Activated naive CD4-positive, alpha-beta T cell treated with anti-CD3 and anti-CD28 coated beads for 36 hours (primary cell): ENCODE measurements at regions of chr14 and their contacts with region 1.

Region 1: DNA sequence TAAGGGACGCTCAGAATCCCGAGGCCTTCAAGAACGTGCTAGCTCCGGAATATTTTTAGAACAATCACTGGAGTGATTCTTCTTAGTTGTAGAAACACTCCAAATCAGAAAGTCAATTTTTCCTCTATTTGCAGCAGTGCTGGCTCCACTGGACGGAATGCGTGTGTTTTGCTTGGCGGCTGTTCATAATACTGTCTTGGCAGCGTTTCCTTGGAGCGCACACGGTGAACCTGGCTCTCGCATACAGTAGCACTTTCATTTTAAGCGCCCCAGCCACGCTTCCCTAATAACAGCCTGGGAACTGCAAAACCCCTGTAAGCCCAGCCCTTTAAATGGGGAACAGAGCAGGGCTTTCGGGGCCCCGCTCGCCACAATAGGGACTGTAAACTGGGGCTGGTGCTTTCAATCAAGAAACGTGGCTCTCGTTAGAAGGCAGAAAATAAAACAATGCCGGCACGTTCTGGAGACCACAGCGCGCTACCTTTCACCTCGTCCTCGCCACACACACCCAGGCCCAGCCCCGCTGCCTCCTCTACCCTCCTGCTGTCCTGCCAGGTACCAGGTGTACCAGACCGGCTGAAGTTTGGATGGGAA is 79.9 kb downstream of the BCL11B start:
- DNase-seq: peak; percentile 59
- H3K4me3 Mint-ChIP-seq: peak overlapping the region; percentile 77
- H3K27ac Mint-ChIP-seq: peak overlapping the region; percentile 95
- H3K4me1 Mint-ChIP-seq: peaks cover 81% of the 10 kb centered on the region
- H3K27me3 Mint-ChIP-seq: no peaks in the 10 kb centered on the region

Region 2: DNA sequence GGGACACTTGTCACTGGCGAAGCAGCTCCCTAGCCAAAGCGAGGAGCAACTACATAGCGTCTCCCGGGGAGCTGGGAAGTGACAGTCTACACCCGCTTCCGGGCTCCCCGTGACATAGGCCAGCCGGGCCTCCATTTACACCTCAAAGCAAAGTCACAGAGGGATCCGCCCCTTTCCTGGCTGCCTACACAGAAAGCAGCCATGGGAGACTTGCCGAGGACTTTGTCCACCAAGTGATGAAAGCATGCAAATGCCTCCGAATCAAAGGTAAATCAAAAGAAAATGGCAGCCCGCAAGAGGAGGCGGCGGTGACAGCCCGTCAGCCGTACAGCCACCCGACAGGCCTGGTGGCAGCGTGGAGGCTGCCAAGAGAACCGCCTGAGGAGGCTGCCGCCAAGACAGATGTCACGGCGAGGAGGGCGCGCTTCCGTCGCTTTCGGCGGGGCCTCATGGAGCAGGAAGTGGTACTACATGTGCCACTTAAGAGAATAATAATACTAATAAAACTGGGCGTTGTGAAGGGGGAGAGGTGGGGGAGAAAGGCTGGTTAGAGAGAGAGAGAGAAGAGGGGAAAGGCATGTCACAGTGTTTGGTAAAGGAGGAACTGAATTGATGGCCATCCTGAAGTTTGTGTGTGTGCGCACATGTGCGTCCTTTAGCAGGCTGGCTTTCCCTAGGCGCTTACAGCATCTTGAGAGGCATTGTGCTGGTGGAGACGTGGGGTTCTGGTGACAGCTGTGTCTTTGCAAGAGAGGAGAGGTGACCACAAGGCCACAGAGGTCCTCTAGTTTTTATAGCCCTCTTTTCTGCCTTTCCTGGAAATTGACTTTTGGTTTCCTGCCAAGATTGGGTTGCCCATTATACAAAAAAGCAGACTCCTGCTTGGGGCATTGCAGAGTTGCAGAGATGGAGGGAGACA is 1733.2 kb before region 1 on chr14:
- CTCF ChIA-PET with region 1: no interaction called
- intact Hi-C with region 1: loop called (anchors 10 kb)
- DNase-seq: peak; percentile 91
- H3K4me3 Mint-ChIP-seq: peak overlapping the region; percentile 96
- H3K27ac Mint-ChIP-seq: peak overlapping the region; percentile 100
- H3K4me1 Mint-ChIP-seq: peaks cover 32% of the 10 kb centered on the region
- H3K27me3 Mint-ChIP-seq: no peaks in the 10 kb centered on the region

Region 3: GRCh38 chr14:98144964-98145363 is 1047.2 kb before region 1 on chr14:
- CTCF ChIA-PET with region 1: no interaction called
- intact Hi-C with region 1: loop called (anchors 5 kb)
- DNase-seq: no peak
- H3K4me3 Mint-ChIP-seq: no peak overlapping the region
- H3K27ac Mint-ChIP-seq: peak overlapping the region; percentile 77
- H3K4me1 Mint-ChIP-seq: peaks cover 64% of the 10 kb centered on the region
- H3K27me3 Mint-ChIP-seq: no peaks in the 10 kb centered on the region

Region 4: GRCh38 chr14:98548071-98548686 is 643.9 kb before region 1 on chr14:
- CTCF ChIA-PET with region 1: no interaction called
- intact Hi-C with region 1: loop called (anchors 5 kb)
- DNase-seq: peak; percentile 69
- H3K4me3 Mint-ChIP-seq: peak overlapping the region; percentile 22
- H3K27ac Mint-ChIP-seq: peak overlapping the region; percentile 91
- H3K4me1 Mint-ChIP-seq: peaks cover 22% of the 10 kb centered on the region
- H3K27me3 Mint-ChIP-seq: no peaks in the 10 kb centered on the region

Region 5: DNA sequence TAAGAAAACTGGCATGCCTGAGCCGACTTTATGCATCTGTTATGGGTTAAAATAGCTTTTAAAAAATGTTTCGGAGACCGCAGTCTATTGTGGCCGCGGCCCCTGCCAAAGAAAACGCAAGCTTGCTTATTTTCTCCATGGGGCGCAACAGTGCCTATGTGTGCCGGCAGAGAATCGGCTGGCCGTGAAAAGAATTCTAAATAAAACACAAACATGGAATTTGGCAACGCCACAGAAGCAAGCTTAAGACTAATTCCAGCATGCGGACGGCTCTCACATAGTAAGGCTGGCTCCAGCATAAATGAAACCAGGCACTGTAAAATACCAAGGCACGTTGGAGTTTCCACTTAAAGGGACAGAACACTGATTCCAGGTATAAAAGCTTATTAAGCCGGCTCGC is 23.2 kb after region 1 on chr14:
- CTCF ChIA-PET with region 1: interaction called, 5 read pairs
- intact Hi-C with region 1: loop called (anchors 1 kb)
- DNase-seq: no peak
- H3K4me3 Mint-ChIP-seq: peak overlapping the region; percentile 71
- H3K27ac Mint-ChIP-seq: peak overlapping the region; percentile 85
- H3K4me1 Mint-ChIP-seq: peaks cover 94% of the 10 kb centered on the region
- H3K27me3 Mint-ChIP-seq: no peaks in the 10 kb centered on the region

Region 6: DNA sequence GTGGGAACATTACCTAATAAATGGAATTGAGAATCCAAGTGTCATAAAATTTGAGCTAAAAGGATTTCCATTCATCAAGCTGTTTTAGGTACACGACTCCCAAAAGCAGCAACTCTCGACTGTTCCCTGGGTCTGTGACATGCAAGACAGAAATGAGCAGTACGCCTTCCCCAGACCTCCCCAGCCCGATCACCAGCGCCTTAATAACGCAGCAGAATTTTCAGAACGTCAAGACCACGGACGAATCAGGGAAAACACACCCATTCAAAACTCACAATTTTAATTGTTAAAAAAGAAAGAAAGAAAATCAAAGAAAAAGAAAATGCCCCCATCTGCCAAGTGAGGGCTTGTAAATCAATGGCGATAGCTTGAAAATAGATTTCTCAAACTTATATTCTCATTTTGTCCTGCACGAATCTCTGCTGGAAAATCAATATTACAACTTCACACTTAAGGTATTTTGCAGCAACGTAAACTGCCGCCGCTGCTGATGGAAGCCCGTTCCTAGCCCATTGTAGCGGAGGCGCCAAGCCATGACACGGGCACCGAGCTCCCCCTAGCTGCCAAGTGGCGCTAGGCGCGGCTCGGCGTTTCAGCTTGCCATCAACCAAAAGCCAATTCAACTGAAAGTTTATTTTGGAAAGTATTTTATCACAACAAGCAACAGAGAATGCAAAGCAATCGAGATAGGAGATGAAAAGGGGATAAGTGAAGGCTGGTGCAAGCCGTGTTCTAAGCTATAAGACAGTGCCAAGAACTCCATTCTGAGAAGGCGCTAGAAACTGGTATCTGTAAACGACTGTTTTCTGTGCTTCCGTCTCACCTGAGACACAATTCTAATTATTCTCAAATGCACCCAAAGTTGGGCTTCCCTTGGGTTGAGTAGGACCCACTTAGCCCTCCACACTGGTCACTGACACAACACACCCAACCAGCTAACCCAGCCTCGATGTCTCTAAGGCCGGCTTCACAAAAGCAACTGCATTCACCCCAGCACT is 74.4 kb after region 1 on chr14:
- CTCF ChIA-PET with region 1: interaction called, 20 read pairs
- intact Hi-C with region 1: loop called (anchors 1 kb)
- DNase-seq: peak; percentile 93
- H3K4me3 Mint-ChIP-seq: peak overlapping the region; percentile 96
- H3K27ac Mint-ChIP-seq: peak overlapping the region; percentile 95
- H3K4me1 Mint-ChIP-seq: peaks cover 44% of the 10 kb centered on the region
- H3K27me3 Mint-ChIP-seq: no peaks in the 10 kb centered on the region

Region 7: GRCh38 chr14:99320105-99320572 is 128.0 kb after region 1 on chr14:
- CTCF ChIA-PET with region 1: no interaction called
- intact Hi-C with region 1: no loop called
- DNase-seq: peak; percentile 84
- H3K4me3 Mint-ChIP-seq: no peak overlapping the region
- H3K27ac Mint-ChIP-seq: no peak overlapping the region
- H3K4me1 Mint-ChIP-seq: no peaks in the 10 kb centered on the region
- H3K27me3 Mint-ChIP-seq: no peaks in the 10 kb centered on the region